Mammary epithelial cell (primary cell): ENCODE measurements at regions of chr20 and their contacts with region 1.

Region 1: DNA sequence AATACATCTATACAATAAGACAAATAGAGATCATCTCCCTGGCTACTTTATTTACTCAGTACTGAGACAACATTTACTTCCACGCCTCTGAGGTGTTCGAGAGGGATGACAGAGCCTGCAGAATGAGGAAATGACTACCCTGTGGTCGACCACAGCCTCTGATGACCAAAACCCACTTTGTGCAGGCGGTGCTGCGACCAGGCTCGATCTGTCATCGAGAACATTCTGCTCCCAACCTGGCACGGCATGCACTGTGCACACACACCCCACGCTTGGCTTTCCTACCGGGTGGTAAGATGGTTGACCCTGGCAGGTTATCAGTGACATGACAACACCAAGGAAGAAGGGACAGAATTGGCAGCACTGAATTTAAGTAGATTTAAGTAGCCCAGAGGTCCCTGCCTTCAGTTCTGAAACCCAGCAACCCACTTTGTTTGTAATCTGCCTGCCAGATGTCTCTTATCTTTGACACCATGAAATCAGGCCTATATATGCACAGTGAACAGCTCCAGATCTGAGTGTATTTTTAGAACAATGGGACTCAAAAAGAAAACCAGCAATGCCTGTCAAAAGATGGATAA is 42.6 kb downstream of the TTI1 start:
- DNase-seq: peak; percentile 91
- H3K4me3 ChIP-seq: no peak overlapping the region
- H3K27ac ChIP-seq: peak overlapping the region; percentile 76
- H3K4me1 ChIP-seq: peaks cover 58% of the 10 kb centered on the region
- H3K27me3 ChIP-seq: no peaks in the 10 kb centered on the region
- CTCF ChIP-seq: no peak

Region 2: DNA sequence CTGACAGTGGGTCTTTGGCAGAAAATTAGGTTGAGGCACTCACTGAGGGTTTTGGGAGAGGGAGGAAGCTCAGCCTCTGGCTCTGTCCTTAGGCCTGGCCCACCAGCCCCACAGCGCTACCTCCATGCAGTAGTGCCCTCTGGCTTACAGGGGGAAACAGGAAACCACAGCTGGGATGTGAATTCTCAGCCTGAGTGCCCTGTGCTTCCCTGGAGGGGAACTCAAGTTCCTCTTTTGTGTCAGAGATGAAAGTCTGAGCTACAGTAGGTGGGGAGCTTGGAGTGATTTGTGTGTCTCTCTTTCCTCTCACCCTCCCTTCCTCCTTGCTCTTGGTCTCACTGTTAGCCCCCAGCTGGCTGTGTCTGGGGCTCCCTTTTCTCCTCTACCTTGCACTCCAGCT is 414.8 kb before region 1 on chr20:
- CTCF ChIA-PET with region 1: no interaction called
- dilution Hi-C with region 1: no loop called
- in situ Hi-C with region 1: loop called in 1 of 2 experiments (anchors 10 kb)
- intact Hi-C with region 1: no loop called
- DNase-seq: no peak
- H3K4me3 ChIP-seq: no peak overlapping the region
- H3K27ac ChIP-seq: no peak overlapping the region
- H3K4me1 ChIP-seq: no peaks in the 10 kb centered on the region
- H3K27me3 ChIP-seq: no peaks in the 10 kb centered on the region
- CTCF ChIP-seq: no peak

Region 3: DNA sequence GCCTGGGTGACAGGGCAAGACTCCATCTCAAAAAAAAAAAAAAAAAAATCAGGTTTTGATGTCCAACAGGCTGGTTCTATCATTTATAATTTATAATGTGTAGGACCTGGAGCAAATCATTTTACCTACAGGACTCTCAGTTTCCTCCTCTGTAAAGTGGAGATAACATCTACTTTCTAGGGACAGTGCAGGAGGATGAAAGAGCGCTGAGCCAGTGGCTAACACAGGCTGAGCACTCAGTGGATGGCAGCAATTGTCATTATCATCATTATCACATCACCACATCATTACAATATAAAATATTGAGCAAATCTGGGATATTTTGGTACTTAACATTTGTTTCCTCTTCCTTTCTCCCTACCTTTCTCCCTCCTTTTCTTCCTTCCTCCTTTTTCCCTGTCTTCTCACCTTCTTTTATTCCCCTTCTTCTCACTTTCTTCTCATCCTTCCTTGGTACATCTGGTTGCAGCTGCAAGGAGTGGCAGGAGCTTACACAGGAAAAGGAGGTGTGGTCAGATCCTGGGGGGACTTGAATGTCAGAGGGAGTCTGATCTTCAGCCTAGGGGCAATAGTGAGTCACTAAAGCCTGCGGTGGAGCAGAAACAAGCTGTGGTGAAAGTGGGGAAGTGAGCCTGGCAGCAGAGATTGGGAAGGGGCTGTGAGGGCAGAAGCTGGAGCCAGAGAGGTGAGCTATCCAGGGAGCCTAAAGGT is 321.4 kb before region 1 on chr20:
- CTCF ChIA-PET with region 1: interaction called, 14 read pairs
- dilution Hi-C with region 1: no loop called
- in situ Hi-C with region 1: no loop called
- intact Hi-C with region 1: no loop called
- DNase-seq: peak; percentile 30
- H3K4me3 ChIP-seq: no peak overlapping the region
- H3K27ac ChIP-seq: no peak overlapping the region
- H3K4me1 ChIP-seq: no peaks in the 10 kb centered on the region
- H3K27me3 ChIP-seq: peaks cover 6% of the 10 kb centered on the region
- CTCF ChIP-seq: no peak

Region 4: DNA sequence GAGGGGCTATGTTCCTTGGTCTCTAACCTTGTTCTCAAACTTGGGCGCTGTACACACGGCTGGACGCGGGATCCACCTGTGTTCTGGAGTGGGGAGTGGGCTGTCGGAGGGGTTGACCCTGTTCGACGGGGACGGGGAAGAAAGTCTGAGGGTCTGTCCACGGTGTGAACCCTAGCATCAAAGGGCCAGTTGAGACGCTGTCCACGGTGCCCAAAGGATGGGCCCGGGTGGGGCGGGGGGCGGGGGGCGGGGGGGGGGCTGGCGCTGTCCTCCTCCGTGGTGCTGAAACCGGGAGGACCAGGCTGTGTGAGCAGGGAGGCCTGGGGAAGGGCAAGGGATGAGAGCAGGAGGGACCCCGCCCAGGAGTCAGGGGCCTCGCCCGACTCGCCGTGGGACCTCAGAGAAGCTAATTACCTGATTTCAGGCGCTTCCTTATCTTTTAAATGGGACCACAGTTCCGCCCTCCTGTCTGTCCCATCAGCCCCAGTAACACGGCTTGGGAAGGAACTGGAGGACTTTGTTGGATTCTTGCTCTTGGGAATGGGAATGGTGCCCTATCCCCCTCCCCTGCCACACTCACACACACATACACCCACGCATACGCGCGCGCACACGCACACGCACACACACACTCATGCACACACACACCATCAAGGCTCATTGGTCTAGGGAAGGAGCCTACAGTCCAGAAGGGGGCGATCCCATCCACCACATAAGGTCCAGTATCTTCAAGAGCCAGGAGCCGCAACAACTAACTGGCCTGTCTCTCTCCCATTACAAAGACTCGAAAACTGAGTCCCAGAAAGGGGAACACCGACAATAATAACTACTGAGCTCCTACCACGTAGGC is 88.8 kb before region 1 on chr20:
- CTCF ChIA-PET with region 1: no interaction called
- dilution Hi-C with region 1: no loop called
- in situ Hi-C with region 1: no loop called
- intact Hi-C with region 1: loop called (anchors 1 kb)
- DNase-seq: peak; percentile 62
- H3K4me3 ChIP-seq: peak overlapping the region in 2 of 3 experiments; percentile 35 to 65
- H3K27ac ChIP-seq: no peak overlapping the region
- H3K4me1 ChIP-seq: peaks cover 7% of the 10 kb centered on the region
- H3K27me3 ChIP-seq: no peaks in the 10 kb centered on the region
- CTCF ChIP-seq: peak; percentile 27 to 57

Region 5: GRCh38 chr20:38143646-38144554 is 153.2 kb after region 1 on chr20:
- CTCF ChIA-PET with region 1: no interaction called
- dilution Hi-C with region 1: no loop called
- in situ Hi-C with region 1: no loop called
- intact Hi-C with region 1: no loop called
- DNase-seq: peak; percentile 97
- H3K4me3 ChIP-seq: no peak overlapping the region
- H3K27ac ChIP-seq: peak overlapping the region; percentile 68
- H3K4me1 ChIP-seq: peaks cover 38% of the 10 kb centered on the region
- H3K27me3 ChIP-seq: no peaks in the 10 kb centered on the region
- CTCF ChIP-seq: no peak